Activated T-helper 2 cell treated with anti-CD3 and anti-CD28 coated beads, Interferon-gamma antibody, Interleukin-2, Interleukin-4, amounts not matched to agents 10 μg/mL and 5 μg/mL and 100 μg/mL, durations not matched to agents 14 hours and 24 hours and 36 hours (primary cell): ENCODE measurements at regions of chr14 and their contacts with region 1.

Region 1: DNA sequence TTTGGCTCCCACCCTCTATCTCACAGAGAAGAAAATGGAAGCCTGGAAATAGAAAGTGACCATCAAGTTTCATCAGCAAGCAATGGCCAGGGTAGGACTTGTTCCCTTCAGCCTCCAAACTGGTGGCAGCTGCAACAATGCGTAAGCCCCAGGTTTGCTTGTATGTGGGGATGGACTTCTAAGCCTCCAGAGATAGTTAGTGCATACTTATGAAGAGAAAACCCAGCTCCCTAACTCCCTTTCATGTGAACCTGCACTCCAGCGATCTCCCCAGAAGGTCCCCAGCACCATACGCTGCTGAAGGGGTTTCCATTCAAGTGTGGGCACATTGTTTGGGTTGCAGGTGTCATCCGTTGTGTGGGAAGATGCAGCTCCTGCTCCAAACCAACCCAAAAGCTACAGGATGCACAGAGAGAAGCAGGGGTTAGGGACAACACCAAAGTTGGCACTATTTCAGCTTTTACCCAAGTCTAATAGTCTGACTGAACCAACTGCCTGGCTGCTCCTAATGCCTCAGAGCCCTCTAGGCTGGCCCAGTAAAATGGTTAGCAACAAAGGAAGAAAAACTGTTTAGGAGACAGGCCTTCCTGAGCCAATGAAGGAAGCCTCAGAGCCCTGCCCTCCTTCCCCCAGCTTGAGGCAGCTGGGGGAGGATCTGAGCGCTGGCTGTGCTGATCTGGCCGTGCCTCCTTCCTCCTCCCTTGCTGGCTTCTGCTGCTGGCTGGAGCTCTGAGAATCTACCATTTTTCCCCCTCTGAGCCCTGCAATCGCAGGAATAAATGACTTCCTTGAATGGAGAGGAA is 12.3 kb downstream of the ZFP36L1 start:
- DNase-seq: no peak
- H3K4me3 Mint-ChIP-seq: peak overlapping the region; percentile 67
- H3K27ac Mint-ChIP-seq: peak overlapping the region; percentile 92
- H3K4me1 Mint-ChIP-seq: peaks cover 63% of the 10 kb centered on the region
- H3K27me3 Mint-ChIP-seq: no peaks in the 10 kb centered on the region

Region 2: DNA sequence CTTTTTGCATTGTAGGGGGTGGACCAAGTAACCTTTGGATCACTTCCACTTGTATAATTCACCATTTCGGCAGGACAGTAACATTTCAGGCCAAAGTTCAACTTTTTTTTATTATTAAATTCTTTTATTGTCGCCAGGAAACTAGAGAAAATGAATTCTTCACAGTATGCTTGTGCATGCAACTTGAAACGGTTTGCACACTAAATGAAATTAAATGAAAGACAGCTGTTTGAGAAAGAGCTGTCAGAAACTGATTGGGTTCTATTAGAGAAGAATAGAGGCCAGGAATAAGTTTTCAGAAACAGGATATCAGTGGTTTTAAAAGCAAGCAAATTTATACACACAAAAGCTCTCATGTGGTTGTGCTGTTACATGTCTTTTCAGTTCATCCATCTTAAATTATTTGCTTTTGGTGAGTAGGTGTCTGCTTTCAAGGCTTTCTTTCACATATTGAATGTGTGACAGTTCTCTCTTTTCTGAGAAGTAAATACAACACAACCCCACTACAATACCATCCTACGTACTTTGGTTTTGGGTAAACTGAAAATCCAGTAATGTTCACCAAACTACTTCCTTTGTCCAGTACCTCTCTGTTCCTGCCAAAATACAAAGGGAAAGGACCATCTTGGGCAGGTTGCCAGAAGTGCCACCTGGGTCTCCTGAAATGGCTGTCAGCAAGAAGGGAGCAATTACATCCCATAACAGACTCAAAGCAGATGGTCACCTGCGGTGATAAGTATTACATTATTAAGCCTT is 669.3 kb before region 1 on chr14:
- intact Hi-C with region 1: no loop called
- DNase-seq: no peak
- H3K4me3 Mint-ChIP-seq: no peak overlapping the region
- H3K27ac Mint-ChIP-seq: no peak overlapping the region
- H3K4me1 Mint-ChIP-seq: peaks cover 11% of the 10 kb centered on the region
- H3K27me3 Mint-ChIP-seq: no peaks in the 10 kb centered on the region

Region 3: DNA sequence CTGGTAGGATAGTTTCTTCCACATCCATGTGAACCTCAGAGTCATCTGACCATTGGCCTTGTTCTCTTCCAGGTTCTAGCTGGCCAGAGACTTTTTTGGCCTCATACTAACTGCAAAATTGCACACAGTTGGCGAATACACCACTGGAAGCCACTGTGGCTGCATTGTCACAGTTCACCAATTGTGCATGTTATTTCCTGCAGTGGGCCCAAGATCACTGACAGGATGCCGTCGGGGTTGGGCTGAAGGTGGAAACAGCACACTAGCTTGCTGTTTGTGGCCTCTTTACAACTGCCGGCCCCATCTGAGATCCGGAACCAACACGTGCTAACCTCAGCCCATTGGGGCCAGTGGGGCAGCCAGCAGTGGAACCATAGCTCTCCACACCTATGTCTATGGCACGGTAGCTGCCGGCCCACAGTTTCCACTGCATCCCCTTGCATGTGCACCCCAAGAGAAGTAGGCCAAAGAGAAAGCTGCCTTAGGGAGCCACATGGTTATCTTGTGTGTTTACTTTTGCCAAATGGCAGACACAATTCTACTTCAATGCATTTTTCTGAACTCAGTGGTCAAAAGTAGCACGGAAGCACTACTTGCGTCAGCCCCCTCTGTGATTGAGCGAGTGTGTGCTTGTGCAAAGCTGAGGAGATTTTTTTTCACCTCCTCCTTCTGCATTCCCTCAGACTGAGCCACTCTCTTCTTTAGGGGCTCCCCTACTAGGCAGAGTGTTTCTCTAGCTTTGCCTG is 497.0 kb before region 1 on chr14:
- intact Hi-C with region 1: loop called (anchors 5 kb)
- DNase-seq: peak; percentile 33
- H3K4me3 Mint-ChIP-seq: no peak overlapping the region
- H3K27ac Mint-ChIP-seq: peak overlapping the region; percentile 59
- H3K4me1 Mint-ChIP-seq: peaks cover 55% of the 10 kb centered on the region
- H3K27me3 Mint-ChIP-seq: no peaks in the 10 kb centered on the region

Region 4: GRCh38 chr14:68621400-68622365 is 158.9 kb before region 1 on chr14:
- intact Hi-C with region 1: no loop called
- DNase-seq: no peak
- H3K4me3 Mint-ChIP-seq: no peak overlapping the region
- H3K27ac Mint-ChIP-seq: no peak overlapping the region
- H3K4me1 Mint-ChIP-seq: no peaks in the 10 kb centered on the region
- H3K27me3 Mint-ChIP-seq: no peaks in the 10 kb centered on the region

Region 5: DNA sequence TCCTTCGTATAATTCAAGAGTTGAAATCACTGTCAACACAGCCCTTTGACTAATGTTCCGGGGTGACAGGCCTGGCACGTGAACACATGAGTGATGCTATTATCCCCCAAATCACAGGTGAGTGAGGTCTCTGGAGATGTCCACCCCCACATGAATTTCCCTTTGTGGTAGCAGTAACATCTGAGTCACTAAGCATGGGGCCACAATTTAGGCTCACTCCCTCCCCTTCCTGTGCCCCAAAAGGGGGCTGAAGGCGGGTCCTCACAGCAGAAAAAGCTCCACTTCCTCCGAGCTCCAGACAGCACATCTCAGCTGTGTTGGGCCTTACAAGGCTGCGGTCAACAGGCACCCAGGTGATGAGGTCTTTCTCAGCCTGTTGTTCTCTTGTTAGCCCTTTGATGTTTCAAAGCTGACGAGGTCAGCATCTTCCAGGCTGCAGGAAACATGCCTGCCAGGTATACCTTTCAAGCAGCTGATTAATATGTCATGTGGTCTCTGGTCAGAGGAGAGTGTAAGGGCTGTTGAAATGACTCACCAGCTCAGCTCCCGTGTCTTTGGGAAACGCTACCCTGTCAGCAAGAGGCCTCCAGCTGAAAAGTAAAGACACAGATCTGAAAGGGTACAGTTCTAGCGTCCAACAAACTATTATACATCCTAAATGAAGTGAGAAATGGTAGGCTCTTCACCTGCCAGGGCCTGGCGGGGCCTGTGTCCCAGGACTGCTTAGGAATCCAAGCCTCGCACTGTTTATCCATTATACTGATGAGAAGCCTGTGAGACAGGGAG is 94.9 kb before region 1 on chr14:
- intact Hi-C with region 1: loop called (anchors 2 kb)
- DNase-seq: peak; percentile 70
- H3K4me3 Mint-ChIP-seq: peak overlapping the region; percentile 24
- H3K27ac Mint-ChIP-seq: peak overlapping the region; percentile 76
- H3K4me1 Mint-ChIP-seq: peaks cover 41% of the 10 kb centered on the region
- H3K27me3 Mint-ChIP-seq: no peaks in the 10 kb centered on the region

Region 6: GRCh38 chr14:68727315-68728047 is 53.1 kb before region 1 on chr14:
- intact Hi-C with region 1: loop called (anchors 1 kb)
- DNase-seq: no peak
- H3K4me3 Mint-ChIP-seq: no peak overlapping the region
- H3K27ac Mint-ChIP-seq: no peak overlapping the region
- H3K4me1 Mint-ChIP-seq: peaks cover 40% of the 10 kb centered on the region
- H3K27me3 Mint-ChIP-seq: no peaks in the 10 kb centered on the region

Region 7: GRCh38 chr14:68734231-68734775 is 46.3 kb before region 1 on chr14:
- intact Hi-C with region 1: loop called (anchors 1 kb)
- DNase-seq: no peak
- H3K4me3 Mint-ChIP-seq: peak overlapping the region; percentile 9
- H3K27ac Mint-ChIP-seq: peak overlapping the region; percentile 63
- H3K4me1 Mint-ChIP-seq: peaks cover 53% of the 10 kb centered on the region
- H3K27me3 Mint-ChIP-seq: no peaks in the 10 kb centered on the region

Region 8: GRCh38 chr14:68814376-68815230 is 34.0 kb after region 1 on chr14:
- intact Hi-C with region 1: no loop called
- DNase-seq: no peak
- H3K4me3 Mint-ChIP-seq: peak overlapping the region; percentile 79
- H3K27ac Mint-ChIP-seq: peak overlapping the region; percentile 92
- H3K4me1 Mint-ChIP-seq: peaks cover 35% of the 10 kb centered on the region
- H3K27me3 Mint-ChIP-seq: no peaks in the 10 kb centered on the region

Region 9: GRCh38 chr14:68824517-68825347 is 44.2 kb after region 1 on chr14:
- intact Hi-C with region 1: no loop called
- DNase-seq: no peak
- H3K4me3 Mint-ChIP-seq: no peak overlapping the region
- H3K27ac Mint-ChIP-seq: no peak overlapping the region
- H3K4me1 Mint-ChIP-seq: peaks cover 32% of the 10 kb centered on the region
- H3K27me3 Mint-ChIP-seq: peaks cover 1% of the 10 kb centered on the region